Dorsolateral prefrontal cortex (tissue), 120 donors: ENCODE measurements at regions of chr1 and their contacts with region 1.

Region 1: GRCh38 chr1:109397538-109398342 is at the start of gene SORT1:
- DNase-seq: peak; percentile 88 to 98 (median 96)
- H3K4me3 ChIP-seq: peak within 1 kb of the TSS; percentile 53 to 94 (median 75)
- H3K27ac ChIP-seq: peak within 1 kb of the TSS; percentile 86 to 100 (median 96)
- H3K27me3 ChIP-seq: no peaks in the 10 kb centered on the region
- CTCF ChIP-seq: peak in 31 of 56 donors; percentile 5 to 47 (median 22)
- total RNA-seq, gene SORT1: 214 to 579 (median 329) TPM

Region 2: DNA sequence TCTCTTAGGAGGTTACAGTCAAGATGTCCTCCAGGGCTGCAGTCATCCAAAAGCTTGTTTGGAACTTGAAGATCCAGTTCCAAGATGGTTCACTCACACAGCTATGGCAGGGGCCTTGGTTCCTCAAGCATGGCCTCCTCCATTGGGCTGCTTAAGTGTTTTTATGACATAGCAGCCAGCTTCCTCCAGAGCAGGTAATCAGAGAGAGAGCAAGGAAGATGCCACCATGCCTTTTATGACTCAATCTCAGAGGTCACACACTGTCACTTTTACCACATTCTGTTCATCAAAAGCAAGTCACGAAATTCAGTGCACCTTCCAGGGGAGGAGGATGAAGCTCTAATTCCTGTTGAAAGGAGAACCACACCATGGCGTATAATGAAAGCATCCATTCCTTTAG is 266.7 kb before region 1 on chr1:
- intact Hi-C with region 1: no loop called
- DNase-seq: no peak
- H3K4me3 ChIP-seq: no peak overlapping the region
- H3K27ac ChIP-seq: no peak overlapping the region
- H3K27me3 ChIP-seq: no peaks in the 10 kb centered on the region
- CTCF ChIP-seq: no peak

Region 3: GRCh38 chr1:109201123-109201703 is 196.5 kb before region 1 on chr1:
- intact Hi-C with region 1: loop called in 1 of 2 experiments (anchors 5 kb)
- DNase-seq: peak; percentile 16 to 85 (median 74)
- H3K4me3 ChIP-seq: no peak overlapping the region
- H3K27ac ChIP-seq: peak overlapping the region in 53 of 59 donors; percentile 1 to 85 (median 57)
- H3K27me3 ChIP-seq: no peaks in the 10 kb centered on the region
- CTCF ChIP-seq: peak; percentile 36 to 88 (median 72)

Region 4: GRCh38 chr1:109263597-109264398 is 133.9 kb before region 1 on chr1:
- intact Hi-C with region 1: loop called in 1 of 2 experiments (anchors 1 kb)
- DNase-seq: peak; percentile 38 to 90 (median 82)
- H3K4me3 ChIP-seq: peak overlapping the region in 40 of 59 donors; percentile 0 to 57 (median 28)
- H3K27ac ChIP-seq: peak overlapping the region; percentile 71 to 100 (median 93)
- H3K27me3 ChIP-seq: no peaks in the 10 kb centered on the region
- CTCF ChIP-seq: peak; percentile 58 to 98 (median 92)

Region 5: DNA sequence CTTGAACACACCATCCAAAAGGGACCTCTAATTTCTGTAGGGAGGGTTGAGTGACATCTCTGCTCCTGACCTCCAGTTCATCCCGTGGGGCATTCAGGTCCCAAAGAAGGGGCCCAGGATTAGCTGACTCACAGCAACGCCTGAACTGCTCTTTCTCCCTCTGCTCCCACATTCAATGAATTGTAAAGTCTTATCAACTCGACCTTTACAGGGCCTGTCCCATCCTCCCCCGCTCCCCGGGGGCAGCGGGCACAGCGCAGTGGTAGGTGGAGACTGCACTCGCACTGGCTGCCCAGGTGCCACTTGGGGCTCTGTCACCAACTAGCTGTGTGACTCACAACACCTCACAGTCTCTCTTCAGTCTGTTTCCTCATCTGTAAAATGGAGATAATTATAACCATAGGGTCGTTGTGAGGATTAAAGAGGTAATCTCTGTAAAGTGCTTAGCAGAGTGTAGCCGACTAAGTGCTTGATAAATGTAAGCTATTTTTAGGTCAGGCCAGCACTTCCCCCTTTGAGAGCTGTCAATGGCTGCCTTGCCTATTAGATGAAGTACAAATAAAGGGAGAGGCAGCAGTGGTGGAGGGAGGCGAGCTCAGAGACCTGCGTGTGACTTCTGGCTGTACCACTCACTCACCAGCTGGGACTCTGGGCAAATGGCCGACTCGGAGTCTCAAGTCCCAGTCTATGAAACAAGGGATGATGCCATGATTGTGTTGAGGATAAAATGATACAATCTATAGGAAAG is 90.3 kb before region 1 on chr1:
- intact Hi-C with region 1: loop called (anchors 2 kb)
- DNase-seq: peak in 9 of 10 donors; percentile 37 to 80 (median 78)
- H3K4me3 ChIP-seq: peak overlapping the region in 1 of 59 donors; percentile 10
- H3K27ac ChIP-seq: peak overlapping the region; percentile 84 to 100 (median 97)
- H3K27me3 ChIP-seq: no peaks in the 10 kb centered on the region
- CTCF ChIP-seq: no peak